Activated B cell treated with CpG ODN at 0.5 μM for 24 hours (primary cell): ENCODE measurements at regions of chr11 and their contacts with region 1.

Region 1: DNA sequence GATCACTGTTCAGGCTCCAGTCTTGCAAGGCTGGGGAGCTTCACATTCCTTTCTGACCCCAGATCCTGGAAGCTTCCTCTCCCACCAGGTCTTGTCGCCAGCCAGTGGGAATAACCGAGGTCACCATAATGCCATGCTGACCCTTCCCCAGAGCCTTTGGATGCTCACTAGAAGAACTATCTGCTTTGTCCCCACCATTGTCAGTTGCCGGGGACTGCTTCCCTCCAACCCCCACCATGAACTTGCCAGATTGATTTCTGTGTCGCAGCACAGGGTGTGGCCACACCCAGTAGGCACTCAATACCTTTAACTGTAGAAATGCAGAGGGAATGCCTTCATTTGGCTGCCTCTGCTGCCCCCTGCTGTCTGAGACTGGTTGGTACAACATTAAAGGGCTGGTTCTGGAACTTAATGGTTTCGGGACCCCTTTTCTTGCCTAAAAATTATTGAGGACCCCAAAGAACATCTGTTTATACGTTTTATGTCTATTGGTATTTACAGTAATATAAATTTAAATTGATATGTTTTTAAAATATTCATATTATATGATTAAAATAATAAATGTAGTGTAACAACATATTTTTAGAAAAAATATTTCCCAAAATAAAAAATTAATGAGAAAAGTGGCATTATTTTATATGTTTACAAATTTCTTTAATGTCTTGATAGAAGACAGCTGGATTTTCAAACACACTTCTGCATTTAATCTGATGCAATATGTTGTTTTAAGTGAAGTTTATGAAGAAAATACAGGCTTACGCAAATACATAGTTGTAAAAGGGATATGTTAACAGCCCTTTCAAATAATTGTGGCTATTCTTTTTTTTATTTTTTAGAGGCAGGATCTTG is 6.7 kb upstream of the GDPD5 start:
- DNase-seq: peak; percentile 60
- ATAC-seq: peak; percentile 71
- H3K4me3 Mint-ChIP-seq: no peak overlapping the region
- H3K27ac Mint-ChIP-seq: no peak overlapping the region
- H3K4me1 Mint-ChIP-seq: peaks cover 23% of the 10 kb centered on the region
- H3K27me3 Mint-ChIP-seq: peaks cover 11% of the 10 kb centered on the region
- CTCF ChIP-seq: no peak

Region 2: GRCh38 chr11:75280227-75280701 is 252.2 kb before region 1 on chr11:
- CTCF ChIA-PET with region 1: interaction called, 6 read pairs
- POLR2A ChIA-PET with region 1: no interaction called
- intact Hi-C with region 1: loop called (anchors 1 kb)
- DNase-seq: peak; percentile 48
- ATAC-seq: peak; percentile 81
- H3K4me3 Mint-ChIP-seq: no peak overlapping the region
- H3K27ac Mint-ChIP-seq: no peak overlapping the region
- H3K4me1 Mint-ChIP-seq: peaks cover 19% of the 10 kb centered on the region
- H3K27me3 Mint-ChIP-seq: no peaks in the 10 kb centered on the region
- CTCF ChIP-seq: peak; percentile 69

Region 3: GRCh38 chr11:75388386-75389275 is 143.8 kb before region 1 on chr11:
- CTCF ChIA-PET with region 1: interaction called, 34 read pairs
- POLR2A ChIA-PET with region 1: no interaction called
- intact Hi-C with region 1: loop called (anchors 1 kb)
- DNase-seq: peak; percentile 33
- ATAC-seq: peak; percentile 92
- H3K4me3 Mint-ChIP-seq: no peak overlapping the region
- H3K27ac Mint-ChIP-seq: no peak overlapping the region
- H3K4me1 Mint-ChIP-seq: peaks cover 4% of the 10 kb centered on the region
- H3K27me3 Mint-ChIP-seq: peaks cover 16% of the 10 kb centered on the region
- CTCF ChIP-seq: no peak

Region 4: GRCh38 chr11:75408852-75409219 is 123.6 kb before region 1 on chr11:
- CTCF ChIA-PET with region 1: interaction called, 11 read pairs
- POLR2A ChIA-PET with region 1: no interaction called
- intact Hi-C with region 1: loop called (anchors 1 kb)
- DNase-seq: no peak
- ATAC-seq: no peak
- H3K4me3 Mint-ChIP-seq: no peak overlapping the region
- H3K27ac Mint-ChIP-seq: no peak overlapping the region
- H3K4me1 Mint-ChIP-seq: peaks cover 19% of the 10 kb centered on the region
- H3K27me3 Mint-ChIP-seq: no peaks in the 10 kb centered on the region
- CTCF ChIP-seq: no peak

Region 5: DNA sequence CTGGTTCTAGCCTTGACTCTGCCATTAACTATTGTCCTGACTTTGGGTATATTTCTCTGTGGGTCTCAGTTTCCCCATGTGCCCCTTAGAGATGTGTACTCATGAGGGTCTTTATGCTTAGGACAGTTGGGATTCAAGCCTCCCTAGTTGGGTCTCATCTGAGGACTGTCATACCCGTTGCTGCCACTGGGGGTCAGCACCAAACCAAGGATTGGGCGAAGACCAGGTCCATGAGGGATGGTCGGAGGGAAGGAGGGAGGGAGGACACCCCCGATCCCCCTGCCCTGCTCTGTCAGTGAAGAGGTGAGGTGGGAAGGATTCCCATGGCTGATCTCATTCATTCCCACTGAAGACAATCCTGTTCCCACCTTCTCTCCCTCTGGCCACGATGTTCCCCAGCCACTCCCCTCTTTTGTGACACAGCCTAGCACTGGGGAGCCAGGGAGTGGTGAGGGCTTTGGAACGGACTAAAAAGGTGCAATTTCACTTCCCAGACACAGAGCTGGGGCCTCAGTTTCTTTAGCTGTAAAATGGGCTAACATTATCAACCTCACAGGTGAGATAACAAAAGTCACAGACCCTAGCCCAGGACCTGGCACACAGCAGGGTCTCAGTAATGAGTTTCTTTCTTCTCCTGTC is 87.0 kb before region 1 on chr11:
- CTCF ChIA-PET with region 1: interaction called, 153 read pairs
- POLR2A ChIA-PET with region 1: interaction called, 3 read pairs
- intact Hi-C with region 1: loop called (anchors 1 kb)
- DNase-seq: peak; percentile 69
- ATAC-seq: peak; percentile 98
- H3K4me3 Mint-ChIP-seq: no peak overlapping the region
- H3K27ac Mint-ChIP-seq: no peak overlapping the region
- H3K4me1 Mint-ChIP-seq: no peaks in the 10 kb centered on the region
- H3K27me3 Mint-ChIP-seq: no peaks in the 10 kb centered on the region
- CTCF ChIP-seq: no peak

Region 6: DNA sequence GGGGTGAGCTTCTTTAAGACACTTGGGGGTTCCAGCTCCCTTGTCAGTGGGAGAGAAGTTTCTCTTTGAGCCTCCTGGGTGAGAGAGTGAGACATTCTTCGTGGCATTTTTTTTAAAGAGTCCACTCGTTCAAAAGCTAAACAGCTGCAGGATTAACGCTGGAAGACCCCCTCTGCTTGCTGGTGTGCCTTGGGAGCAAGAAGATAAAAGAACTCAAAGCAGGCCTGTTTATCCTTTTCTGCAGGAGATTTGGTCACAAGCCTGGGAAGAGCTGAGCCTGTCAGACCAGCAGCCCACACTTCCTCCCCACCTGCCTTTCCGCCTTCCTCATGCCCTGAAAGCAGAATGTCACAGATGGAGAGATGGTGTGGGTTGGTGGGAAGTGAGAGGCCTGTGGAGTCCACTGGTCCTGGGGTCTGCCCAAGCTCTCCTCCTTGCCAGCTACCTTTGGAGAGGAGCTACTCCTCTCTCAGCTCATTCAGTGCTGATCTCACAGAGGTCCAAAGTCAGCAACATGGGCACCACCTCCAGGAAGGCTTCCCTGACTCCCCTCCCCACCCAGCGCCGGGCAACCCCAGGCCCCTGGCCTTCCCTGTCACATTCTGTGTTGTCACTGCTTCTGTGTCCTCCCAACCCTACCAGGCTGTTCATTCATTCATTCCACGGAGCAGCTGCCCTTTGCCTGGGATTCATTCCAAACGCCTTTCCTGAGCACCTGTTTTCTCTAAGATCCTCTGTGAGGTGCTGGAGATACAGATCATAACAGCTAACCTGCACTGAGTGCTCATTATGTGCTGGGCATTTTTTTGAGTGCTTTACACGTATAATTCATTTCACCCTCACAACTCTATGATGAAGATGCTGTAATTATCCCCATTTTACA is 13.4 kb before region 1 on chr11:
- CTCF ChIA-PET with region 1: interaction called, 14 read pairs
- POLR2A ChIA-PET with region 1: interaction called, 3 read pairs
- intact Hi-C with region 1: no loop called
- DNase-seq: no peak
- ATAC-seq: no peak
- H3K4me3 Mint-ChIP-seq: no peak overlapping the region
- H3K27ac Mint-ChIP-seq: peak overlapping the region; percentile 72
- H3K4me1 Mint-ChIP-seq: peaks cover 70% of the 10 kb centered on the region
- H3K27me3 Mint-ChIP-seq: no peaks in the 10 kb centered on the region
- CTCF ChIP-seq: no peak

Region 7: DNA sequence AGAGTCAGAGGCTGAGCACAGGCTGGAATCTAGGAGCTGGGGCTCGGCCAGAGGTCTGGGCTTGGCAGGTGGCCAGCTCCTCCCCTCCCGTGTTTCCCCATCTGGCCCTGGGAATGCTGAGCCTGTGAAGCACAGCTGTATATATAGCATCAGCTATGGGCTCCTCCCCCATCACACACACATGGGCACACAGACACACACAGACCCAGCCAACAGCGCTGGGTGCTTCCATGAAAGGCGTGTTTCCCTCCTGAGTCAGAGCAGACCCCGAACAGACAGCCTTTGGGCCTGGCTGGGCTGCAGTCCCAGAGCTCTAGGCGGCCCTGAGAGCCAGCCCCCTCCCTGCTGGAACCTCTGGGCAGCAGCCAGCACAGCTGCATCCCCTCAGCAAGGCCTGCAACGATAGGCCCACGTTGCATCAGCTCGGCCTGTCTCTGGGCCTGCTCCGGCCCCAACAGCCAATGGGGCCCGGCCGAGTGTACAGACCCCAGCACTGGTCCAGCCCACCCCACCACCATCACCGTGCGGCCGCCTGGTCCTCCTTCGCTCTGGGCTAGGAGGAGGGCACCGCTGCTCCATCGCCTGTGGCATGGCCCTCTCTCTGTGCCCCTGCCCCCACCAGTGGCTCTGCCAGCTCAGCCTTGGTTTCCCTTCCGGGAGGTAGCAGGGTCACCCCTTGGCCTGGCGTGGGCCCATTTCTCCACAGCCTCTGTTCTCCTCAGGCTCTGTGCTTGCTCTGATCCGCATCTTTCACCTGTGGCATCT is 22.0 kb after region 1 on chr11:
- CTCF ChIA-PET with region 1: no interaction called
- POLR2A ChIA-PET with region 1: no interaction called
- intact Hi-C with region 1: no loop called
- DNase-seq: no peak
- ATAC-seq: no peak
- H3K4me3 Mint-ChIP-seq: no peak overlapping the region
- H3K27ac Mint-ChIP-seq: no peak overlapping the region
- H3K4me1 Mint-ChIP-seq: no peaks in the 10 kb centered on the region
- H3K27me3 Mint-ChIP-seq: no peaks in the 10 kb centered on the region
- CTCF ChIP-seq: no peak